Tibial artery (tissue), 4 donors: ENCODE measurements at regions of chr3 and their contacts with region 1.

Region 1: GRCh38 chr3:23294770-23295387 is 91.8 kb downstream of the UBE2E2 start:
- DNase-seq: no peak
- H3K4me3 ChIP-seq: no peak overlapping the region
- H3K27ac ChIP-seq: no peak overlapping the region
- H3K4me1 ChIP-seq: peaks cover 0 to 9% (median 0%) of the 10 kb centered on the region in 4 donors
- H3K27me3 ChIP-seq: no peaks in the 10 kb centered on the region
- CTCF ChIP-seq: no peak

Region 2: DNA sequence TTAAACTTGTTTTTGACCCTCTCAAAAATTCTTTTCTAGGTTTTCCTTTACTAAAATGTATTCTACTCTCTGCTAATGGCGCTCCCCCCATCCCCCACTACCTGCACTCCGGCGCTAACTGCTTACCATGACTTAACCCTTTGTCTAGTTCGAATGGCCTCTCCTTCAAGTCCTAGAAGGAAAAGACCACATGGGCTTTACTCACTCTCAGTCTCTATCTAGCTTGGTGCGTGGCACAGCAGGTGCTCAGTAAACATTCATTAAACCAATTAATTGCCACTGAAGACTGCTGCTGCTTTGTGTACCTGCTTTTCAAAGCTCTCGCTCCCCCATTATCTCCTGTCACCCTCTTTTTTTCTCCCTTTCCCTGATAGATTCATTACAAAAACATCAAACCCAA is 1657.5 kb after region 1 on chr3:
- intact Hi-C with region 1: loop called (anchors 5 kb)
- DNase-seq: no peak
- H3K4me3 ChIP-seq: no peak overlapping the region
- H3K27ac ChIP-seq: no peak overlapping the region
- H3K4me1 ChIP-seq: no peaks in the 10 kb centered on the region
- H3K27me3 ChIP-seq: no peaks in the 10 kb centered on the region
- CTCF ChIP-seq: no peak